BJ (cell line): ENCODE measurements at regions of chr2 and their contacts with region 1.

Region 1: GRCh38 chr2:60505880-60506260 is 47.6 kb downstream of the BCL11A start:
- DNase-seq: no peak
- H3K4me3 ChIP-seq: no peak overlapping the region
- H3K27me3 ChIP-seq: no peaks in the 10 kb centered on the region
- CTCF ChIP-seq: no peak

Region 2: DNA sequence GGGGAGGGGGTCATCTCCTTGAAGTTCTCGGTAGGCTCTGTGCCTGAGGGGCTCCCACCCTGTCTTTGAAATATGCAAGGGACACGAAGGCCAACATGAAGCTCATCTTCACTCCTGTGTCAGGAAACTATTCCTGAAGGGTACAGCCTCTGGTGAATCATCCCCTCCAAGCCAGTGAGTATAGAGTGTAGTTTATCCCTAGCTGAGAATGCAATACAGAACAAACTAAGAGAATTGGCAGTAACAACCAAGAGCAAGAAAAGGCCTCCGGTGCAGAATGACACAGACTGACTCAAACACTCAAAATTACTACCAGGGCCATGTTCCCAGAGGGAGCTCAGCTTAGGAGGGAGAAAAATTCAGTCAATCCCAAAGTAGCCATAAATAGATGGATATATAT is 365.7 kb before region 1 on chr2:
- CTCF ChIA-PET with region 1: no interaction called
- POLR2A ChIA-PET with region 1: no interaction called
- DNase-seq: no peak
- H3K4me3 ChIP-seq: no peak overlapping the region
- H3K27me3 ChIP-seq: no peaks in the 10 kb centered on the region
- CTCF ChIP-seq: no peak

Region 3: GRCh38 chr2:60522476-60522875 is 16.6 kb after region 1 on chr2:
- CTCF ChIA-PET with region 1: interaction called, 11 read pairs
- POLR2A ChIA-PET with region 1: no interaction called
- DNase-seq: no peak
- H3K4me3 ChIP-seq: no peak overlapping the region
- H3K27me3 ChIP-seq: no peaks in the 10 kb centered on the region
- CTCF ChIP-seq: no peak